ENCODE measurements at regions of chr3 and their contacts with region 1.

Region 1: DNA sequence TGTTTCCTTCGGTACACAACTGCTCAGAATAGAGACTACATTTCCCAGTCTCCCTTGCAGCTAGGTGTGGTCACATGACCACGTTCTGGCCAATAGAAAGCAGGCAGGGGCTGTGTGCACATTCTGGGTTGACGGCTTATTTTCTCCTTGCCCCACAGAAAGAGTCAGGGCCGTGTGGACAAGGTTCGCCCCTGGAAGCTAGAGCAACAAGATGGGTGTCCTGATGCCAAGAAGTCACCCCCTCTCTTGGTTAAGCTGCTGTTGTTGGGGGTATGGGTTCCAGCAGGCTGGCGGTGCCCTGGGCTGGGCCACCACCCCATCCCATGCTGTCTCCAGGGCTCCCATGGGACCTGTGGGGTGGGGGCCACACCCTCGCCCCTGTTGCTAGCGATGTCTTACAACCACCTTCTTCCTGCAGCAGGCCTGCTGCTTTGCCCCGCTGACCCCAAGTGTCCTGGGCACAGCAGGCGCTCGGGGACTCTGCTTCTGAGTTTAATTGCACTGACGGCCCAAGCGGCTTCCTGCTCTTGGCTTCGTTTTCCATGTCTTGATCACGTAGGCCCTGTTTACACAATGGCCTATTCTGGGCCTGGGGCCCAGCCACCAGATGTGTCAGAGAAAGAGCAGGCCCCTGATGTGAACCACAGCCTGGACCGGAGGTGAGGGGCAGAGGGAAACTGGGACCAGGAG is 24.9 kb downstream of the ABTB1 start:
- DNase-seq: peak; percentile 58
- ATAC-seq: peak; percentile 82
- H3K4me3 ChIP-seq: peak overlapping the region in 2 of 3 experiments; percentile 43 to 55; a peak in 4 of 6 replicates
- H3K27ac ChIP-seq: no peak overlapping the region
- H3K4me1 ChIP-seq: peaks cover 12% of the 10 kb centered on the region
- H3K27me3 ChIP-seq: peaks cover 0 to 2% of the 10 kb centered on the region in 2 experiments; a peak in 2 of 5 replicates
- CTCF ChIP-seq: 0 out of 2 replicates have a peak, but pooled peaks have one; percentile 7
- EP300 ChIP-seq: no peak
- POLR2A ChIP-seq: no peak
- RAD21 ChIP-seq: no peak

Region 2: GRCh38 chr3:127590593-127591477 is 106.9 kb before region 1 on chr3 and contains the start of gene TPRA1:
- CTCF ChIA-PET with region 1: no interaction called
- POLR2A ChIA-PET with region 1: no interaction called
- in situ Hi-C with region 1: no loop called
- intact Hi-C with region 1: loop called (anchors 10 kb)
- DNase-seq: peak; percentile 98
- ATAC-seq: peak; percentile 88
- H3K4me3 ChIP-seq: peak within 1 kb of the TSS; percentile 93 to 97 (median 94)
- H3K27ac ChIP-seq: peak within 1 kb of the TSS; percentile 85
- H3K4me1 ChIP-seq: peaks cover 35% of the 10 kb centered on the region
- H3K27me3 ChIP-seq: no peaks in the 10 kb centered on the region; a peak in 1 of 5 replicates
- CTCF ChIP-seq: peak; percentile 65
- EP300 ChIP-seq: peak; percentile 30 to 76; a peak in 2 of 4 replicates
- POLR2A ChIP-seq: peak in 1 of 2 experiments; percentile 86; a peak in 2 of 4 replicates
- RAD21 ChIP-seq: peak; percentile 45
- total RNA-seq, gene TPRA1: 16.0 and 25.8 TPM in 2 replicates

Region 3: DNA sequence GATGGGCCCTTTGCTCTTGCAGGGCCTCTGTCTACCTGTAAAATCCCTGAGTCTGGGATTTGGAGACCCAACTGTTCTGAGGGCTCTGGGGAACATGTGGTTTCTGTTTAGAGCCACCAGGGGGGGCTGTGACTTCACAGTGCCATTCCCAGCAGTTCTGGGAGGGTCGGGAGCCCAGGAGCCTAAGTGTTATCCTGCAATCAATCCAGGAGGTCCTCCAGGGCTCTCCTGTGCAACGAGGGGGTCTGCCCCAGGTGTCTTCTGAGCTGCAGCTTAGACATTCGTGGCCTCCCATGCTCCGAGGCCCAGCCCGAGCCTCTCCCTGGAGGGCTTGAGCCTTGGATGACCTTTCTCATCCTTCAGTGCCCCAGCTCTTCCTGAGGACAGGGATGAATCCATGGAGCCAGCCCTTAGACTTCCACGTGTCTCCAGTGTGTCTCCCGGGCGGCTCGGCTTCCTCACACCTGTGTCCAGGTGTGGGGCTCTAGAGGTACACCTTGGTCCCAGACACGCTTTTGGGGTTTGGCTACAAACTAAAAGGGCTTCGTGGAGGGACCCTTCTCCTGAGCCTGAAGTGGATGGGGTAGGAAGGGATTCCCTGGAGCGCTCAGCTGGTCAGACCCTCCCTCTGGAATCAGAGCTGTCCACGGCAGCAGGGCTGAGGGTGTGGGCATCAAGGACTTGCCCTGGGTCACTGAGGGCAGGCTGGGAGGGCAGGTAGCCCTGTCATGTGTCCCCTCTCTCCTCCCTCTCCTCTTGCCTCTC is 45.3 kb before region 1 on chr3:
- CTCF ChIA-PET with region 1: interaction called, 7 read pairs
- POLR2A ChIA-PET with region 1: no interaction called
- in situ Hi-C with region 1: no loop called
- intact Hi-C with region 1: loop called (anchors 2 kb)
- DNase-seq: peak; percentile 37
- ATAC-seq: peak; percentile 96
- H3K4me3 ChIP-seq: no peak overlapping the region
- H3K27ac ChIP-seq: no peak overlapping the region
- H3K4me1 ChIP-seq: peaks cover 10% of the 10 kb centered on the region; the same call in 1 of the 2 replicates
- H3K27me3 ChIP-seq: no peaks in the 10 kb centered on the region
- CTCF ChIP-seq: peak; percentile 83
- EP300 ChIP-seq: no peak
- POLR2A ChIP-seq: no peak
- RAD21 ChIP-seq: peak; percentile 75

Region 4: DNA sequence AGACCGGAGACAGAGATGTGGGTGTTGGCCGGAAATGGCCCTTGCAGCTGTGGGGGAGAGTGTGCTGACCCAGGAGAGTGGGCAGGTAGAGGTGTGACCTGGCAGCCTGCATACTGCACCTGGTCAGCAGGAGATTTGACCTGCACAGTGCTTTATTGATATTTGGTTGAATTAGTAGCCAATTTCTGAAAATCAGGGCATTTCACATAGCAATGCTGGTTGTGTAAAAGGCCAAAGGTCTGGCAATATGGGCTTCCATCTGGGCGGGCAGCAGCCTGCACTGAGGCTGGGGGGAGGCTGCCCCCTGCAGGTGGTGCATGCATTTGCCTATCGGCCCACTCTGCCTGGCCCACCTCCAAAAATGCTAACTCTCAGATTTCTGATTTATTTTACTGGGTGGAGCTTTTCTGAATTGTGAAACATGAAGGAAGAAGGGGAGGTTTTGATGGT is 134.1 kb after region 1 on chr3:
- CTCF ChIA-PET with region 1: no interaction called
- POLR2A ChIA-PET with region 1: no interaction called
- in situ Hi-C with region 1: loop called (anchors 5 kb)
- intact Hi-C with region 1: loop called (anchors 10 kb)
- DNase-seq: no peak
- ATAC-seq: peak; percentile 85
- H3K4me3 ChIP-seq: no peak overlapping the region
- H3K27ac ChIP-seq: no peak overlapping the region
- H3K4me1 ChIP-seq: peaks cover 22% of the 10 kb centered on the region
- H3K27me3 ChIP-seq: no peaks in the 10 kb centered on the region; a peak in 1 of 5 replicates
- CTCF ChIP-seq: peak; percentile 64
- EP300 ChIP-seq: no peak
- POLR2A ChIP-seq: no peak
- RAD21 ChIP-seq: peak; percentile 72

Region 5: DNA sequence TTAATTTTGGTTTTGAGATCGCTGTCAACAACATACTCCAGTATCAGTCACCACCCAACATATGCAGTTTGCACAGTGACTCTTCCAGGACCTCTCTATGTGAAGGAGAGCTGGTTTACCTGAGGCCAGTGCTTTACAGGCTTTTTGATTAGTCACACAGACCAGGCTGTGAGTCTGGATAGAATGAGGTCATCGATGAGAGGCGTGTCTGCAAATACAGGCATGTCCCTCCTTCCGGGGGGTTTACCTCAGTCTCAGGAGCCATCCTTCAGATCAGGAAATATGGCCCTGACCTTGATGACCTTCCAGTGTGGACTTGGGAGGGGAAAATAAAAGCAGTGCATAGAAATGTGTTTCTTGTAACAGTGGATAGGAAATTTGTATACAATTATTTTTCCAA is 264.3 kb after region 1 on chr3:
- CTCF ChIA-PET with region 1: no interaction called
- POLR2A ChIA-PET with region 1: no interaction called
- in situ Hi-C with region 1: no loop called
- intact Hi-C with region 1: no loop called
- DNase-seq: peak; percentile 76
- ATAC-seq: peak; percentile 72
- H3K4me3 ChIP-seq: no peak overlapping the region
- H3K27ac ChIP-seq: no peak overlapping the region
- H3K4me1 ChIP-seq: peaks cover 11% of the 10 kb centered on the region
- H3K27me3 ChIP-seq: 0 out of 5 replicates have a peak, but pooled peaks cover 0 to 8% of the 10 kb centered on the region in 2 experiments
- CTCF ChIP-seq: no peak
- EP300 ChIP-seq: peak in 1 of 2 experiments; percentile 38; a peak in 1 of 4 replicates
- POLR2A ChIP-seq: no peak
- RAD21 ChIP-seq: no peak

Measured in HepG2 (cell line).